Mammary epithelial cell (primary cell): ENCODE measurements at regions of chr7 and their contacts with region 1.

Region 1: GRCh38 chr7:46352004-46352954 is 431.2 kb upstream of the IGFBP3 start:
- DNase-seq: peak; percentile 47
- H3K4me3 ChIP-seq: no peak overlapping the region
- H3K27ac ChIP-seq: no peak overlapping the region
- H3K4me1 ChIP-seq: no peaks in the 10 kb centered on the region
- H3K27me3 ChIP-seq: no peaks in the 10 kb centered on the region
- CTCF ChIP-seq: peak; percentile 53 to 89

Region 2: DNA sequence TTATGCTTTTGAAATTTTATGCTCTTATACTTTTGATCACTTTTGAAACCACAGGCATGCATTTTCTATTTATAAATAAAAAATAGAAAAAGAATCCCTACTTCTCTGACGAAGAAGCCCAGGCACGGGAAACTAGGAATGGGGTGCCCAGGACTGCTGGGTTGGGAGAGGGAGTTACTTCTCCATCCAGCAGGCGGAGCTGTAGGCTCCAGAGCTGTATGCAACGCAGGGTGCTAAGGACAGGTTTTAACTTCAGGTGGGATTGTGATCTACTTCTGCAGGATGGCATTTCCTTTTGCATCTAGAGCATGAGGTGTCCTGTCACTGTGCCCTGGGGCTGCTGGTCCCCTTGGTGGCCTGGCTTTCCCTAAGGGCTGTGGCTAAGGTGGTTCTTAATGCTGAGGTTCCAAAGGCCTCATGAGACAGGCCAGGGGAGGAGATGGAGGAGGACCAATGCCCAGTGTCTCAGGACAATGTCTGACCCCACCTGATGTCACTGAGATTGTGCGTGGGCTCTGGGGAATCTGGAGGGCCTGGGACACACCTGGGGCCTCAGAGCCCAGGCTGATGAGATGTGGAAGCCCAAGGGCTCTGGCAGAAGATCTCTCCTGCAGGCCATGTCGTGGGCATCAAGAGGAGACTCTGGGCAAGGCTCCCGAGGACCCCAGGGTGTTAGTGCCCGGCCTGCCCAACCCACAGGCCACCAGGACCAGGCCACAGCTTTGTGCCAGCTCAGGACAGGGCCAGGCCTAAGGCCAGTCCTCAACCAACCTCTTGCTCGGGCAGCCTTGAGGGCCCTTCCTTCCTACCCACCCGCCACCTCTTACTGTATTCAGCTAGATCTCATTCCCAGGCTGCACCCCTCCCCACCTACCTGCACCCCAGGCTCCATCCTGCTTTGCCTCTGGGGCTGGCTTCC is 479.9 kb before region 1 on chr7:
- CTCF ChIA-PET with region 1: no interaction called
- dilution Hi-C with region 1: no loop called
- in situ Hi-C with region 1: no loop called
- intact Hi-C with region 1: loop called (anchors 1 kb)
- DNase-seq: no peak
- H3K4me3 ChIP-seq: no peak overlapping the region
- H3K27ac ChIP-seq: no peak overlapping the region
- H3K4me1 ChIP-seq: peaks cover 17% of the 10 kb centered on the region
- H3K27me3 ChIP-seq: no peaks in the 10 kb centered on the region
- CTCF ChIP-seq: peak; percentile 52 to 65

Region 3: GRCh38 chr7:45917658-45918057 is 434.6 kb before region 1 on chr7:
- CTCF ChIA-PET with region 1: interaction called, 4 read pairs
- dilution Hi-C with region 1: loop called (anchors 5 kb)
- in situ Hi-C with region 1: loop called (anchors 5 kb)
- intact Hi-C with region 1: loop called (anchors 1 kb)
- DNase-seq: peak; percentile 35
- H3K4me3 ChIP-seq: no peak overlapping the region
- H3K27ac ChIP-seq: no peak overlapping the region
- H3K4me1 ChIP-seq: peaks cover 19% of the 10 kb centered on the region
- H3K27me3 ChIP-seq: peaks cover 6% of the 10 kb centered on the region
- CTCF ChIP-seq: peak; percentile 90 to 95

Region 4: DNA sequence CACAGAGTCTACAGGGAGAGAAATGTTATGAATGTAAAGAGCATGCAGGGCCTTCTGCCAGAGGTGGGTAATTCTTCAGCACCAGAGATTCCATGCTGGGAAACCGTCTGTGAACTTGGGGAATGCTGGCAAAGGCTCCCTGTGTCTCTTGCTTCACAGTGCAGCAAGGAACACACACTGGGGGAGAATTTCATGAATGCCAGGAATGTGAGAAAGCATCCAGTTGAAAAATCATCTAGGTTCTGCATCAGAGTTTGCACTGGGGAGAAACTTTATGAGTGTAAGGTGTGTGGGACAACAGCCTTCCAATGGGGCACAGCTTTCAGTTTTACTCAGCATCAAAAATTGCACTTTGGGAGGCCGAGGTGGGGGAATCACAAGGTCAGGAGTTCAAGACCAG is 206.9 kb before region 1 on chr7:
- CTCF ChIA-PET with region 1: no interaction called
- dilution Hi-C with region 1: no loop called
- in situ Hi-C with region 1: loop called in 1 of 2 experiments (anchors 25 kb)
- intact Hi-C with region 1: no loop called
- DNase-seq: peak; percentile 71
- H3K4me3 ChIP-seq: no peak overlapping the region
- H3K27ac ChIP-seq: no peak overlapping the region
- H3K4me1 ChIP-seq: peaks cover 7% of the 10 kb centered on the region
- H3K27me3 ChIP-seq: no peaks in the 10 kb centered on the region
- CTCF ChIP-seq: no peak

Region 5: DNA sequence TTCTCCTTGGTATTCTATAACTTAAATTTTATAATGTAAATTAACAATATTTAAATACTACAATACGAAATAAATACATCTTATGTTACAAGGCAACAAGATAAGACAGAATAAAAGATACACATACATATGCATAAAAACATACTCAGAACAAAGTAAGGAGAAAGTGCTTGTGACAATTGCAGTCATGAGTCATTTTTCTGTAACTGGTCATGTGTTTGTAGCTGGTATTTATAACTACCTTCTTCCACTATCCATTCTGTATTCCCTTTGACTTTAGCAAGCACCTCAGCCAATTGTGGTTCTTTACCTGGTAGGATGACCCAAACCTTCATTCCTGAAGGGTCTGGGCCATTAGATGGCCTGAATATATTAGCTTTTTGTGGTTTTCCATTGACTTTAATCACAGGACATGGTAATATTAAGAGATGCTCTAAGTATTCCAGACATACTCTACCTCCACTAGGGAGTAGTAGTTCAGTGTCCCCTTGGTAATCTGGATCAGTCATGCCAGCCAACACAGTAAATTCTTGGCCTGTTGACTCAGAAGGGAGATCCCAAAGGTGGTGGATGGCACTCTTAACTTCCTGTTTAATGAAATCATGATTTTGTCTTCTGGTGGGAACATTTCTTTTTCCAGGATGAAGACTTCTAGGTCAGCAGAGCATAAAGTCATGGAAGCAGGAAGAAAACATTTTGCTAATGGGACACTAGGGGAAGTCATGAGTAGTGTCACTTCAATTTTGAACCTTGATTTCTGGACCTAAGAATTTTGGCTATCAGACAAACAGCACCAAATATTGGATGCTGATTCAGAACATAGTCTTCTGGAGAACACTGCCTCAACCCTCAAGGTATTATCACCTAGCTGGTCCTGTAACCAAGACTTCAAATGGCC is 302.5 kb after region 1 on chr7:
- CTCF ChIA-PET with region 1: no interaction called
- dilution Hi-C with region 1: no loop called
- in situ Hi-C with region 1: no loop called
- intact Hi-C with region 1: loop called (anchors 10 kb)
- DNase-seq: peak; percentile 86
- H3K4me3 ChIP-seq: no peak overlapping the region
- H3K27ac ChIP-seq: peak overlapping the region; percentile 73
- H3K4me1 ChIP-seq: peaks cover 35% of the 10 kb centered on the region
- H3K27me3 ChIP-seq: no peaks in the 10 kb centered on the region
- CTCF ChIP-seq: peak in 1 of 2 donors; percentile 0

Region 6: DNA sequence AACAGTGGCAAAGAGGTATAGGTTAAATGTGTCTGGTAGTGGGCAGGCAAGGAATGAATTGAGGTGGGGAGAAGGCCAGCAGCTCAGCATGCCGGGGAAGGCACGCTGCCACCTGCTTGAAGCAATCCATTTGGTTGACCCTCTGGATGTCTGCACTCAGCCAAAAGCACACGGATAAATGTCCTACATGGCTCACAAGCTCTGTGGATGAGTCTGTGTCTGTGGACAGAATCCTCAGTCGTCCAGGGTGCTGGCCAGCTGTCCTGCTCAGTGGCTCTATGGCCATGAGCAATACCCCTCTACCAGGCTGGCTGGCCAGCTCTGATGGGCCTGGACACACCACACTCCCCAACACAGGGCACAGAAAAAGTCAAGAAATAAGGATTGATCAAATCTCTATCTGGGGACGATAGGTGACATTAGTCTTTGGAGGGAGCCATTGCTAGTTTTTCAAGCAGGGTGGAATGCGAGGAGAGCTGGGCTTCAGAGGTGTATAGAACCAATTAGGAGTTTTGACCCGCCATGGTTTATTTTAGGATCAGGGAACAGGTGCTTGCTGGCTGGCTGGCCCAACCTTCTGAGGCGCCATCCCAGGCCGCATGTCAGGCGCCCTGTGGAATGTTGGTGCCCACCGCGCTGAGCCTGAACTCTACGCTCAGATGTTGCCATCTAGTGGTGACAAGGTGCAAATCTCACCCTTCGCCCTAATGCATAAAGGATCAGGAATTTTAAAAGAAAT is 736.2 kb after region 1 on chr7:
- CTCF ChIA-PET with region 1: no interaction called
- dilution Hi-C with region 1: loop called (anchors 5 kb)
- in situ Hi-C with region 1: no loop called
- intact Hi-C with region 1: loop called (anchors 2 kb)
- DNase-seq: peak; percentile 31
- H3K4me3 ChIP-seq: no peak overlapping the region
- H3K27ac ChIP-seq: no peak overlapping the region
- H3K4me1 ChIP-seq: peaks cover 10% of the 10 kb centered on the region
- H3K27me3 ChIP-seq: no peaks in the 10 kb centered on the region
- CTCF ChIP-seq: peak; percentile 87 to 89